Activated B cell treated with CpG ODN at 0.5 μM for 24 hours (primary cell): ENCODE measurements at regions of chr16 and their contacts with region 1.

Region 1: GRCh38 chr16:57185944-57186871 is at the starts of genes PSME3IP1 and RSPRY1:
- DNase-seq: peak; percentile 89
- ATAC-seq: peak; percentile 91
- H3K4me3 Mint-ChIP-seq: peak within 1 kb of the TSS; percentile 92
- H3K27ac Mint-ChIP-seq: peak within 1 kb of the TSS; percentile 95
- H3K4me1 Mint-ChIP-seq: peaks cover 57% of the 10 kb centered on the region
- H3K27me3 Mint-ChIP-seq: no peaks in the 10 kb centered on the region
- CTCF ChIP-seq: no peak
- total RNA-seq, gene PSME3IP1: 131 and 147 TPM in 2 replicates
- total RNA-seq, gene RSPRY1: 32.6 and 39.9 TPM in 2 replicates

Region 2: DNA sequence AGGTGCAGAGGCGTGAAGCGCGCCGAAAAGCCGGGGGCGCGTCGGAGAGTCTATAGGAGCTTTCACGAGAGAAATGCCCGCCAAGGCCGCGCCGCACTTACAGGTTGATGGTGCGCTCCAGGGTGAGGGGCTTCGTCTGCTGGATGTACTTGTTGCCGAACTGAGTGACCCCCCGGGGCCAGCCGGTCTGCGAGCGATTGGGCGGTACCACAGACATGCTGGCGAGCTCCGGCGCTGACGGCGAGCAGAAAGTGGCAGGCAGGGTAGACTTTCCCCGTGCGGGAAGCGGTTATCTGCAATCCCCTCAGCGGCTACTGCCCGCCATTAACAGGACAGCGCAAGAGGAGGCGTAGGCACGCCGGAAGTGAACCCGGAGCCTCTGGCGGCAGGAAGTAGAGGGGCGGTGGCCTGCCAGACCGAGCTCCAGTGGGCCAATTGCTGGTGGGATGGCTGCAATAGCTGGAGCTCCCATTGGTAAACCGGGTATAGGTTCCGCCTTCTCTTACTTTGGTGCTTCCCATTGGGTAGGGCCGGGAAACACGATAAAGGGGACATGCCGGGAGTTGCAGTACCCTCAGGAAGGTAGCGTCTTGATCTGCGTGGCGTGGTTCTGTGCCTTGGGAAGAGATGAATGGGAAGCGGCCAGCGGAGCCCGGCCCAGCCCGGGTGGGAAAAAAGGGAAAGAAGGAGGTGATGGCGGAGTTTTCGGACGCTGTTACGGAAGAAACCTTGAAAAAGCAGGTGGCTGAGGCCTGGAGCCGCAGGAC is 735.0 kb before region 1 on chr16 and contains the starts of genes NUDT21 and OGFOD1:
- CTCF ChIA-PET with region 1: no interaction called
- POLR2A ChIA-PET with region 1: interaction called, 5 read pairs
- intact Hi-C with region 1: loop called (anchors 1 kb)
- DNase-seq: peak; percentile 73
- ATAC-seq: peak; percentile 99
- H3K4me3 Mint-ChIP-seq: peak within 1 kb of the TSS; percentile 99
- H3K27ac Mint-ChIP-seq: peak within 1 kb of the TSS; percentile 97
- H3K4me1 Mint-ChIP-seq: peaks cover 41% of the 10 kb centered on the region
- H3K27me3 Mint-ChIP-seq: no peaks in the 10 kb centered on the region
- CTCF ChIP-seq: no peak
- total RNA-seq, gene NUDT21: 108 and 111 TPM in 2 replicates
- total RNA-seq, gene OGFOD1: 45.6 and 51.8 TPM in 2 replicates

Region 3: GRCh38 chr16:57091975-57092785 is 94.0 kb before region 1 on chr16 and contains the start of gene CPNE2:
- CTCF ChIA-PET with region 1: no interaction called
- POLR2A ChIA-PET with region 1: interaction called, 10 read pairs
- intact Hi-C with region 1: no loop called
- DNase-seq: peak; percentile 52
- ATAC-seq: peak; percentile 55
- H3K4me3 Mint-ChIP-seq: peak within 1 kb of the TSS; percentile 81
- H3K27ac Mint-ChIP-seq: no peak within 1 kb of the TSS
- H3K4me1 Mint-ChIP-seq: peaks cover 13% of the 10 kb centered on the region
- H3K27me3 Mint-ChIP-seq: peaks cover 24% of the 10 kb centered on the region
- CTCF ChIP-seq: no peak
- total RNA-seq, gene CPNE2: 7.4 and 8.3 TPM in 2 replicates

Region 4: GRCh38 chr16:57204675-57205074 is 18.5 kb after region 1 on chr16:
- CTCF ChIA-PET with region 1: no interaction called
- POLR2A ChIA-PET with region 1: no interaction called
- intact Hi-C with region 1: no loop called
- DNase-seq: no peak
- ATAC-seq: no peak
- H3K4me3 Mint-ChIP-seq: no peak overlapping the region
- H3K27ac Mint-ChIP-seq: no peak overlapping the region
- H3K4me1 Mint-ChIP-seq: peaks cover 2% of the 10 kb centered on the region
- H3K27me3 Mint-ChIP-seq: no peaks in the 10 kb centered on the region
- CTCF ChIP-seq: no peak

Region 5: GRCh38 chr16:57244767-57245471 is 58.7 kb after region 1 on chr16 and contains the start of gene ARL2BP:
- CTCF ChIA-PET with region 1: no interaction called
- POLR2A ChIA-PET with region 1: interaction called, 21 read pairs
- intact Hi-C with region 1: loop called (anchors 1 kb)
- DNase-seq: peak; percentile 95
- ATAC-seq: peak; percentile 95
- H3K4me3 Mint-ChIP-seq: peak within 1 kb of the TSS; percentile 94
- H3K27ac Mint-ChIP-seq: peak within 1 kb of the TSS; percentile 91
- H3K4me1 Mint-ChIP-seq: peaks cover 40% of the 10 kb centered on the region
- H3K27me3 Mint-ChIP-seq: no peaks in the 10 kb centered on the region
- CTCF ChIP-seq: no peak
- total RNA-seq, gene ARL2BP: 27.1 and 29.4 TPM in 2 replicates

Region 6: GRCh38 chr16:57447186-57447962 is 261.2 kb after region 1 on chr16 and contains the starts of genes CIAPIN1 and COQ9:
- CTCF ChIA-PET with region 1: no interaction called
- POLR2A ChIA-PET with region 1: interaction called, 13 read pairs
- intact Hi-C with region 1: loop called (anchors 1 kb)
- DNase-seq: peak; percentile 82
- ATAC-seq: peak; percentile 98
- H3K4me3 Mint-ChIP-seq: peak within 1 kb of the TSS; percentile 91
- H3K27ac Mint-ChIP-seq: peak within 1 kb of the TSS; percentile 84
- H3K4me1 Mint-ChIP-seq: peaks cover 19% of the 10 kb centered on the region
- H3K27me3 Mint-ChIP-seq: no peaks in the 10 kb centered on the region
- CTCF ChIP-seq: no peak
- total RNA-seq, gene CIAPIN1: 47.1 and 52.3 TPM in 2 replicates
- total RNA-seq, gene COQ9: 30.4 and 34.1 TPM in 2 replicates

Region 7: DNA sequence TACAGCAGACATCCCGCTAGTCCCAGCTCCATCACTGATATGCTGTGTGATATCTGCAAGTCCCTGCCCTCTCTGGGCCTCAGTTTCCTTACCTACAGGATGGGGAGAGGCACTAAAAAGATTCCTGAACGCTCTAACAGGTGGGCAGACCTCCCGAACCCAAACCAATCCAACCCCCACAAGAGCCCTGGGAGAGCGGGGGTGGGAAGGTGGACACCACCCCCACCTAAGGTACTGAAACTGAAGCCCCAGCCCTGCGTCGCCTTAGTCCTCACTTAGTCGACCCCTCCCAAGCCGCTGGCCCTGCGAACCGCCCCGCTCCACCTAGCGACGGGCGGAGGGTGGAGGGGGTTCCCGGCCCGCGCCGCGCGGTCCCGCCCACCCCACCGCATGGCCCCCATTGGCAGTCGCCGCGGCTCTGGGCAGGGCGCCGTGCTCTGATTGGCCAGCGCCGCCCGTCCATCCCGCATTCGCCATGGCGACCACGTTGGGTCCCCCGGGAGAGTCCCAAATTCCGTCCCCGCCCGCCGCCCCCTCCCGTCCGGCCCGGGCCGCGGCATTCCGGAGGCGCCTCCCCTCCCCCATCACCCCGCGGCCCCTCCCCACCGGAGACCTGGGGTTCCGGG is 349.6 kb after region 1 on chr16:
- CTCF ChIA-PET with region 1: no interaction called
- POLR2A ChIA-PET with region 1: no interaction called
- intact Hi-C with region 1: loop called (anchors 5 kb)
- DNase-seq: peak; percentile 87
- ATAC-seq: peak; percentile 70
- H3K4me3 Mint-ChIP-seq: peak overlapping the region; percentile 85
- H3K27ac Mint-ChIP-seq: peak overlapping the region; percentile 89
- H3K4me1 Mint-ChIP-seq: peaks cover 83% of the 10 kb centered on the region
- H3K27me3 Mint-ChIP-seq: no peaks in the 10 kb centered on the region
- CTCF ChIP-seq: no peak